CD4-positive, alpha-beta T cell (primary cell): ENCODE measurements at regions of chr3 and their contacts with region 1.

Region 1: DNA sequence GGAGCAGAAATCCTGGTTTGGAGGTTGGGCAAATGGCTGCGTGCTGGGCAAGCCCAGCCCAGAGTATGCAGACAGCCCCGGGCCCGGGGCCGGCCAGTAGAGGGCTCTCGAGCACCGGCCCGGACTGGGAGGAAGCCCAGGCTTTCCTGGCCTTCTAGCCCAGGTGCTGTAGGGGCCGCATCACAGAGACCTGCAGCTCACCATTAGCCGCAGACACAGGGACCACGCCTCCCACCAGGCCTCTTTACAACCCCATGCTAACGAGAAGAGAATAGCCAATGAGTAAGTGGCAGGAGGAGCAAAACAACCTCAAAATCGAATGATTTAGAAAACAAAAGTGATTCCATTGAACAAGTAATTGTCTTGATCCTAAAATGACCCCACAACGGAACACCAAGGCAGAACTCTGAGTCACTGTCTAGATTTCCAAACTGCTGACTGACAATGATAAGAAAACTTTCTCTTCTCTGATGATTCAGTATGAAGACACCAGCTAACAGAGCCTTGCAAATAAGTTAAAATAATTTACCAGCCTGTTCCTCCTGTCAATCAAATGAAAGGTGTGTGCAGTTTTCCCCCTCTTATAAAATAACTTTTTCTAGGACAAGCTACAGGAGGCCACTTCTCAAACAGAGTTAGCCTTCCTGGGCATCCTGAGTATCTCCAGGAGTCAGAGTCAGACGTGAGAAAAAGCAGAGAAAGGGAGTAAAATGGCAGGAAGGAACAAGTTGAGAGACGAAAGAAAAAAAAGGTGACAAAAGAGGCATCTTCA is 102.2 kb downstream of the DGKG start:
- DNase-seq: peak; percentile 26 to 81 (median 58)
- ATAC-seq: peak; percentile 95
- H3K4me3 ChIP-seq: no peak overlapping the region
- H3K4me3 Mint-ChIP-seq: no peak overlapping the region
- H3K27ac ChIP-seq: no peak overlapping the region
- H3K27ac Mint-ChIP-seq: no peak overlapping the region
- H3K4me1 ChIP-seq: peaks cover 14% of the 10 kb centered on the region
- H3K4me1 Mint-ChIP-seq: peaks cover 15% of the 10 kb centered on the region
- H3K27me3 ChIP-seq: no peaks in the 10 kb centered on the region
- H3K27me3 Mint-ChIP-seq: no peaks in the 10 kb centered on the region
- CTCF ChIP-seq: peak; percentile 76

Region 2: DNA sequence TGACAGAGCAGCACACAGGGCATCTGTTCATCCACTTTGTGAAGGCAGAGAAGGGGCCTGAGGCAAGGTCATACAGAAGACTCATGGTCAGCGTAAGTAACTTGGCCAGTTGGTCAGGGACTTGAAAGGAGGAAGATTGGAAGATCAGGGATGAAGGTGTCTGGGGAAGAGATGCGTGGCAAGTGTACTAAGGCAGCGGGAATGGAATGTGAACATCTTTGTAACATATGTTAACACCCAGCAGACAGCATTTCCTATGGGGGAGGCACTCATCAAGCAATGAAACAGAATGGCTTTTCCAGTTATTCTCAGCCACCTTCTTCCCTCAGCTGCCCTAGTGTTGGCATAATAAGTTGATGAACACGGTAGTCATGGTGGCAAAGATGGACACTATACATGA is 554.3 kb after region 1 on chr3:
- CTCF ChIA-PET with region 1: no interaction called
- POLR2A ChIA-PET with region 1: no interaction called
- intact Hi-C with region 1: loop called in 1 of 2 experiments (anchors 5 kb)
- DNase-seq: no peak
- ATAC-seq: no peak
- H3K4me3 ChIP-seq: no peak overlapping the region
- H3K4me3 Mint-ChIP-seq: no peak overlapping the region
- H3K27ac ChIP-seq: no peak overlapping the region
- H3K27ac Mint-ChIP-seq: no peak overlapping the region
- H3K4me1 ChIP-seq: no peaks in the 10 kb centered on the region
- H3K4me1 Mint-ChIP-seq: no peaks in the 10 kb centered on the region
- H3K27me3 ChIP-seq: no peaks in the 10 kb centered on the region
- H3K27me3 Mint-ChIP-seq: peaks cover 9% of the 10 kb centered on the region
- CTCF ChIP-seq: no peak